ENCODE measurements at regions of chr9 and their contacts with region 1.

Region 1: DNA sequence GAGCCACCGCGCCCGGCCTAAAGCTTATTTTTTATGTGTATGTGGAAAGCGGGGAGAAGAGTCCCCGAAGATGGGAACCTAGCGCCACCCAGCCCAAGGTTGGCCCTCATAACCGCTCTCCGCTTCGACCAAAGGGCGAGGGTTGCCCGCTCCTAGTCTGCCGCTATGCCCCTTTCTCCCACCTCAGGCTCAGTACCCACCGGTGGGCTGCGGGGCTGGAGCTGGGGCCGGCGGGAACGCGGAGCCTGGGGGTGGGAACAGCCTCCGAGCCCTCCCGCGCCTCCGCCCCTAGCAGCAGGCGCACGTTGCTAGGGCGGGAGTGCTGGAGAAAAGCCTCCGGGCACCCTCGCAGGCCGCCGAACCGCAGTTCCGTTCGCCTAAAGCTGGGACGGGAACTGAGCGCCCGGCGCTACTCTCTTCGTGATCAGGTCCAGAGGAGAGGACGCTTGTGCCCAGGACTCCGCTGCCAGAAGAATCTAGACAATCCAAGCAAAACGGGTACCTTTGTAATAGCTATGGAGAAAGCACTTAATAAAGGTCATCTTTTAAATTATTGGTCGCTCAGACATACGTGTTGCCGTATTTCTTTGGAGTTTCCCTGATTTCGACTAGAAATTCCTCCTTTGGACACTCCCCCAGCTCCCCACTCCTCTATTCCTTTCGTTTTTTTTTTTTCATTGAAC is at the start of gene WDR31:
- DNase-seq: peak; percentile 86
- H3K4me3 ChIP-seq: peak within 1 kb of the TSS; percentile 93 to 99 (median 97)
- H3K27ac ChIP-seq: peak within 1 kb of the TSS; percentile 63
- H3K4me1 ChIP-seq: peaks cover 19% of the 10 kb centered on the region
- H3K27me3 ChIP-seq: no peaks in the 10 kb centered on the region
- CTCF ChIP-seq: no peak
- total RNA-seq, gene WDR31: 2.0 to 2.3 TPM

Region 2: GRCh38 chr9:113299800-113300292 is 40.3 kb before region 1 on chr9:
- CTCF ChIA-PET with region 1: no interaction called
- dilution Hi-C with region 1: loop called (anchors 5 kb)
- in situ Hi-C with region 1: no loop called
- intact Hi-C with region 1: no loop called
- DNase-seq: no peak
- H3K4me3 ChIP-seq: no peak overlapping the region
- H3K27ac ChIP-seq: no peak overlapping the region
- H3K4me1 ChIP-seq: no peaks in the 10 kb centered on the region
- H3K27me3 ChIP-seq: no peaks in the 10 kb centered on the region
- CTCF ChIP-seq: no peak

Region 3: GRCh38 chr9:113376634-113377567 is 36.7 kb after region 1 on chr9 and contains the start of gene HDHD3:
- CTCF ChIA-PET with region 1: no interaction called
- dilution Hi-C with region 1: no loop called
- in situ Hi-C with region 1: no loop called
- intact Hi-C with region 1: loop called (anchors 2 kb)
- DNase-seq: peak; percentile 76
- H3K4me3 ChIP-seq: peak within 1 kb of the TSS; percentile 86 to 92 (median 92)
- H3K27ac ChIP-seq: peak within 1 kb of the TSS; percentile 59
- H3K4me1 ChIP-seq: peaks cover 5% of the 10 kb centered on the region
- H3K27me3 ChIP-seq: no peaks in the 10 kb centered on the region
- CTCF ChIP-seq: no peak
- total RNA-seq, gene HDHD3: 12.3 to 14.6 TPM

Measured in mammary epithelial cell (primary cell).